Left ventricle myocardium superior (tissue), 1 donor: ENCODE measurements at regions of chr14 and their contacts with region 1.

Region 1: DNA sequence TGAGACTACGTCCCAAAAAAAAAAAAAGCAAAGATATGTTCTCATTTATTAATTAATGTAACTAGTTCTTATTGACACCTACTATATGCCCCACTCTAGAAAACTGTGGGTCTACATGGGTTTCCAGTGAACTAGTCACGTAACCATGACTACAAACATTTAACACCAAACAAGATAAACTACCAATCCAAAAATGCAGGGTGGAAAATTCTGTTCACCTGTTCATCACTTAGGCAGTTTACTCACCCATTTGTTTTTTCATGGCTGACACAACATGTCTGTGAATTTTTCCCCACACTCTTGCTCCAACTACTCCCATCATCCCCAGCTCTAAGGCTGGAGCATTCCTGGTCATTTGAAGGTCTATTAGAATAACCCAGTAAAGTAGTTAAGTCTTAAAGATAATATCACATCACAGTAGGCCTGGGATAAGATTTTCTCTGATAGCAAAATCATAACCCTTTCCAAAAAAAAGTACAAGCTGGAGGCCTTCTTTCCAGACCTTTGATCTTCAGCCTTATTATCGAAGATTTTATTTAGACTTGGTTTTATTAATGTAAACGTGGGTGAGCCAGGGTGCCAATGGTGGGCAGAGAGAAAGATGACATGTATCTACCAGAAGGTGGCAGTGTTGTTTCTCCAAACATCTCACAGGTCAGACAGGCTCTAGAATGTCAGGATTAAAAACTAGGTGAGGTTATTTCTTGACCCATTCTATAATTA is 61.6 kb upstream of the DAAM1 start:
- DNase-seq: no peak
- ATAC-seq: peak; percentile 90

Region 2: DNA sequence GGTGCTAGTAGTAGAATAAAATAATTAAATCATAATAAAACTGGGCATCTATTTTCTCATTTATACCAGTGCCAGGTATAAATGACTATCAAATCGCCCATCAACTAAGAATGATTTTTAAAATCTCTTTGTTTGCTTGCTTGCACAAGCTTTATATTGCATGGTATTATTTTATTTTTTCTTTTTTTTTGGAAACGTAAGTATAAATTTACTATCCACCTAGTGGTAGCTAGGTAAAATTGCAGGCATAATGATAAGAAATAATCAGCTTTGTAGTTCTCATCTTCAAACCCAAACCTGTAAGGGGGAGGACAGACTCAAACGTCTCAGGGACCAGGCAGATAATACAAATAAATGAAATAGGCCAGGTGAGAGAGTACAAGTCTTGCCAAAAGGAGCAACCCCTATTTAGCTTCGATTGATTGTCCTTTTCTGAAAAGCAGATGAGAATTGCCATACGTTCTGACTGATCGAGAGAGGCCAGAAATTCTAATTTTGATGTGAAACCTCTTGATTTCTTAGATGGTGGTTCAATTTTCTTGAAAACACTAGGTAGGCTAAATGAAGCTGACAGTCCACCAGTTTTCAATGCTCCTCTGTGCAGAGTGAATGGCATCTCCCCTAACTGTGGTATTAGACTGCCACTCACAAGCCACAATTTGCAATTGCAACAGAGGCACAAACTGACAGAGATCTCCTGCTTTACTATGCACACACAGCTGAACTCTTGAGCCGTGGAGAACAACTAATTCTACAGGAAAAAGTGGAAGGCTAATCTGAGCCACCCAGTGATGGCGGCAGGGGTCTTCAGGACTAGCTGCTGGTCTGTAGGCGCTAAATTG is 299.8 kb before region 1 on chr14:
- intact Hi-C with region 1: no loop called
- DNase-seq: no peak
- ATAC-seq: no peak

Region 3: GRCh38 chr14:58954901-58955861 is 171.7 kb before region 1 on chr14:
- intact Hi-C with region 1: no loop called
- DNase-seq: peak; percentile 29
- ATAC-seq: peak; percentile 91

Region 4: GRCh38 chr14:59438195-59438647 is 311.4 kb after region 1 on chr14:
- intact Hi-C with region 1: loop called (anchors 5 kb)
- DNase-seq: no peak
- ATAC-seq: no peak